Mammary epithelial cell (primary cell): ENCODE measurements at regions of chr16 and their contacts with region 1.

Region 1: DNA sequence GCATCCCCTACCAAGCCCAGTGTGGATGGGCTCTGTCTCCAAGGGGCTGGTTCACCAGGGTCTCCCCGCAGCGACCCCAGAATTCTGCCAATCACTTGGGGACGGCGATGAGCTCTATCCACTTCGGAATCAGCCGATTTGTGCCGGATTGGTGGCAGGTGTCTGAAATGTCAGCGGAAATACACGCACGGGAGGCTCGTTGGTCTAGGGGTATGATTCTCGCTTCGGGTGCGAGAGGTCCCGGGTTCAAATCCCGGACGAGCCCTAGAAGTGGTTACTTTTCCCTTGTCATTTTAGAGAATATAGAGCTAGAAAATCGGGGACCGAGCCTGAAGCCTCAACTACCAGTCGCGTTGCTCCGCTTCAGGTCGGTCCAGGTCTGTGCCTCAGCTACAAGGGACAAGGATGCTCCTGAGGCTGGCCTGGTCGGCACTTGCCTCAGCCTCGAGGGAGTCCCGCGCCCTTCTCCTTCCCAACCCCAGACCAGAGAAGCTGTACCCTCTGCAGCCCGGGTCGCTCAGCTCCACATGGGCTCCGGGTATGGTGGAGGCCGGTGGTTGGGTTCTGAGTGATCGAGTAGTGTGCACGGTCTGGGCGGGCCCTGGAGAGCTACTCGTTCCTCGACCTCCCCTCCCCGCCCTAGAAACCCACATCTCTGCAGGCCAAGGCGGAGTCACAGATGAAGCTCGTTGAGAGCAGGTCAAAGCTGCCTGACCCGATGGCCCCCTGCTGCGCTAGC is 16.0 kb upstream of the OR1F1 start:
- DNase-seq: peak; percentile 84
- H3K4me3 ChIP-seq: peak overlapping the region in 1 of 3 experiments; percentile 21
- H3K27ac ChIP-seq: no peak overlapping the region
- H3K4me1 ChIP-seq: peaks cover 16% of the 10 kb centered on the region
- H3K27me3 ChIP-seq: peaks cover 2% of the 10 kb centered on the region
- CTCF ChIP-seq: no peak

Region 2: GRCh38 chr16:2816751-2817339 is 355.2 kb before region 1 on chr16 and contains the start of gene PRSS21:
- CTCF ChIA-PET with region 1: no interaction called
- dilution Hi-C with region 1: no loop called
- in situ Hi-C with region 1: no loop called
- intact Hi-C with region 1: no loop called
- DNase-seq: no peak
- H3K4me3 ChIP-seq: peak within 1 kb of the TSS in 2 of 3 experiments; percentile 13 to 24
- H3K27ac ChIP-seq: no peak within 1 kb of the TSS
- H3K4me1 ChIP-seq: no peaks in the 10 kb centered on the region
- H3K27me3 ChIP-seq: no peaks in the 10 kb centered on the region
- CTCF ChIP-seq: peak in 1 of 2 donors; percentile 49
- total RNA-seq, gene PRSS21: 0.75 to 24.3 TPM

Region 3: DNA sequence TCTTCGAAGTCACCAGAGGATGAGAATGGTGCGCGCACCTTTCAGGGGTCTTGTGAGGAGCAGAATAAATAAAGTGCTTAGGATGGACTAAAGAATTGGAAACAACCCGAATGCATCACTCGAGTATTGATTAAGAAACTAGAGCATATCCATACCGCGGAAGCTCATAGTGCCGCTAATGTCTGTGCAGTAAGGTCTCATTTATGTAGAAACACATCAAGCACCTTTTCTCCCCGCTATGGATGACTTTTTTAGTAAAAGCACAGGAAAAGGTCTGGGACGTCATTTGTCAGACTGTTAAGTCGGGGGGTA is 36.6 kb before region 1 on chr16:
- CTCF ChIA-PET with region 1: no interaction called
- dilution Hi-C with region 1: no loop called
- in situ Hi-C with region 1: no loop called
- intact Hi-C with region 1: no loop called
- DNase-seq: no peak
- H3K4me3 ChIP-seq: peak overlapping the region; percentile 91 to 100 (median 97)
- H3K27ac ChIP-seq: peak overlapping the region; percentile 77
- H3K4me1 ChIP-seq: peaks cover 7% of the 10 kb centered on the region
- H3K27me3 ChIP-seq: no peaks in the 10 kb centered on the region
- CTCF ChIP-seq: no peak

Region 4: GRCh38 chr16:3182608-3183444 is 10.8 kb after region 1 on chr16:
- CTCF ChIA-PET with region 1: interaction called, 3 read pairs
- dilution Hi-C with region 1: no loop called
- in situ Hi-C with region 1: no loop called
- intact Hi-C with region 1: loop called (anchors 1 kb)
- DNase-seq: peak; percentile 77
- H3K4me3 ChIP-seq: peak overlapping the region; percentile 63 to 75 (median 65)
- H3K27ac ChIP-seq: peak overlapping the region; percentile 18
- H3K4me1 ChIP-seq: no peaks in the 10 kb centered on the region
- H3K27me3 ChIP-seq: no peaks in the 10 kb centered on the region
- CTCF ChIP-seq: peak; percentile 45 to 64

Region 5: DNA sequence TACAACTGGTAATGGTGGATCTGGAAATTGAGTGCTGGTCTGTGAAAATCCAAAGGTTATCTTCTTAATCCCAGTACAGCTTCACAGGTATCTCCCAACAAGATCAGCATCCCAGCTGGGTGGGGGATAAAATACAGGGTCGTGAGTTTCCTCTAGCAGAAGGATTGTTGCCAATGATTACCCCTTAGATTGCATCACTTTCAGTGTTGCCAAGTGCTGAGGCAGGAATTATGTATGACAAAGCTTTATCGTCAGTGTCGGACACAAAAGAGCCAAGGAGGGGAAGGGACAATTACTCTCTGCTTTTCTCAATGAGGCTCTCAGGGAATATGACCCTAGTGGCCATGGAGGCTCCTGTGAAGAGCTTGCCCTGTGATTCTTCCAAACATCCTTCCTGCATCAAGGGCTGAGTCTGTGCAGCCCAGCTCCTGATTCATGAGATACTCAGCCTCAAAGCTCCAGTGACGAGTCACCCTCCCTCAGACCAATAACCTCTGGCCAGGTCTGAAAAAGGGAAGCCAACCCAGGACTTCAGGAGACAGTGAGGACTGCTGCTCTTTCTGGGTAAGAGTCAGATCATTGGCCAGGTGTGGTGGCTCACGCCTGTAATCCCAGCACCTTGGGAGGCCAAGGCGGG is 31.0 kb after region 1 on chr16:
- CTCF ChIA-PET with region 1: no interaction called
- dilution Hi-C with region 1: no loop called
- in situ Hi-C with region 1: no loop called
- intact Hi-C with region 1: no loop called
- DNase-seq: peak; percentile 42
- H3K4me3 ChIP-seq: no peak overlapping the region
- H3K27ac ChIP-seq: no peak overlapping the region
- H3K4me1 ChIP-seq: no peaks in the 10 kb centered on the region
- H3K27me3 ChIP-seq: peaks cover 3% of the 10 kb centered on the region
- CTCF ChIP-seq: no peak

Region 6: DNA sequence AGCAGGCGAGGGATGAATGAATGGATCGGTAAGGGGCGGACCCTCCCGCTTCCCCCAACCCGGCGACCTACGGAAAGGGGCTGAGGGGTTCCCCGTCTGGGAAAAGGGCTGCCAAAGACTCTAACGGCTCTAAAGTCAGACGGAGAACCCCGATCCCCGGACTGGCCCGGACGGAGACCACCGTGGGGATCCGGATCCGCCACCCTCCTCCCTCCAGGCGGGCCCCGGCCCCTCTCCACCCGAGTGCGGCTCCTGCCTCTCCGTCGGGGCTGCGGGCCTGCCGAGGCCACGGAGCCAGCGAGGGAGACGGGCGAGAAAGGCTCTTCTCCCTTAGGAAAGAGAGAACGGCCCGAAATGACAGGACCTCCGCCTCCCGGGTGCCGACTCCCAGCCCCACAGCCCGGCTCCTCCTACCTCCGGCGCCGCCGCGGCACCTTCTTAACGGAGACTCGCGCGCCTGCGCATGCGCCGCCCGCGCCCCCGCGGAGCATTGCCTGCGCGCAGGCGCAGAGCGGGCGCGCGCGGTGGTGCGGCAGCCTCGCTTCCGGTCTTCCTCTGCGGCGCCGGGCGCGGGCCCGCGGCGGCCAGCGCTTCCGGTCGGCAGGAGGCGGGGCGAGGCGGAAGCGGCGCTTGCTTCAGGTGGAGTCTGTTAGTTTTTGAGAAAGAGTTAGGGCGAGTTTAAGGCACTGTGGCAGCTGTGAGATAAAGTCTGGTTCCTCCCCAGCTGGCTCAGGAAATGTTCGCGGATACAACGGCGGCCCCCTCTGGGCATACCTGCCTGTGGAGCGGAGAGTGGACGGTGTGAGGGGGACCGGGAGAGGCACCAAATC is 439.3 kb after region 1 on chr16 and contains the start of gene SLX4:
- CTCF ChIA-PET with region 1: no interaction called
- dilution Hi-C with region 1: no loop called
- in situ Hi-C with region 1: no loop called
- intact Hi-C with region 1: no loop called
- DNase-seq: peak; percentile 88
- H3K4me3 ChIP-seq: peak within 1 kb of the TSS; percentile 86 to 97 (median 94)
- H3K27ac ChIP-seq: peak within 1 kb of the TSS; percentile 55
- H3K4me1 ChIP-seq: peaks cover 17% of the 10 kb centered on the region
- H3K27me3 ChIP-seq: no peaks in the 10 kb centered on the region
- CTCF ChIP-seq: no peak
- total RNA-seq, gene SLX4: 6.2 to 8.7 TPM